Breast epithelium (tissue), 4 donors: ENCODE measurements at regions of chr17 and their contacts with region 1.

Region 1: GRCh38 chr17:65472415-65473309 is 88.8 kb downstream of the AXIN2 start:
- DNase-seq: peak in 1 of 2 donors; percentile 43
- H3K4me3 ChIP-seq: no peak overlapping the region
- H3K27ac ChIP-seq: no peak overlapping the region
- H3K4me1 ChIP-seq: no peaks in the 10 kb centered on the region
- H3K27me3 ChIP-seq: no peaks in the 10 kb centered on the region
- CTCF ChIP-seq: no peak
- POLR2A ChIP-seq: no peak

Region 2: DNA sequence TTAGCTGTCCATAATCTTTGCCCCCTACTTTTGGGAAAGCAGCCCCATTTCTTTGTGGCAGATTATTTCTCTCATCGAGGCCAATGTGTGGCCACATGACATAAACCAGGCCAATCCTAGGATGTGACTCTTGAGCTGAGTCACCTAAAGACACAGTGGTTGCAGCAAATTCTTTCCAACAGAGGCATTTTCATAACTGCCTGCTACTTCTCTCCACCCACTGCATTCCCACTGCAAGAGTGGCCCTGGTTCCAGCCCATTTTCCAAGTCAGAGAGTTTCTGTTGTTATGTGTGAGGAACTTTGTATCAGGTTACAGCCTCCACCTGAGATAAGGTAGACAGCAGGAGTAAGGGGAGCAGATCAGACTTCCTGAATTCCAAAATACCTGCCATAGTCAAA is 140.3 kb before region 1 on chr17:
- intact Hi-C with region 1: no loop called
- DNase-seq: no peak
- H3K4me3 ChIP-seq: no peak overlapping the region
- H3K27ac ChIP-seq: no peak overlapping the region
- H3K4me1 ChIP-seq: no peaks in the 10 kb centered on the region
- H3K27me3 ChIP-seq: no peaks in the 10 kb centered on the region
- CTCF ChIP-seq: no peak
- POLR2A ChIP-seq: no peak

Region 3: GRCh38 chr17:65407017-65407416 is 65.6 kb before region 1 on chr17:
- intact Hi-C with region 1: no loop called
- DNase-seq: no peak
- H3K4me3 ChIP-seq: no peak overlapping the region
- H3K27ac ChIP-seq: no peak overlapping the region
- H3K4me1 ChIP-seq: no peaks in the 10 kb centered on the region
- H3K27me3 ChIP-seq: no peaks in the 10 kb centered on the region
- CTCF ChIP-seq: no peak
- POLR2A ChIP-seq: no peak

Region 4: DNA sequence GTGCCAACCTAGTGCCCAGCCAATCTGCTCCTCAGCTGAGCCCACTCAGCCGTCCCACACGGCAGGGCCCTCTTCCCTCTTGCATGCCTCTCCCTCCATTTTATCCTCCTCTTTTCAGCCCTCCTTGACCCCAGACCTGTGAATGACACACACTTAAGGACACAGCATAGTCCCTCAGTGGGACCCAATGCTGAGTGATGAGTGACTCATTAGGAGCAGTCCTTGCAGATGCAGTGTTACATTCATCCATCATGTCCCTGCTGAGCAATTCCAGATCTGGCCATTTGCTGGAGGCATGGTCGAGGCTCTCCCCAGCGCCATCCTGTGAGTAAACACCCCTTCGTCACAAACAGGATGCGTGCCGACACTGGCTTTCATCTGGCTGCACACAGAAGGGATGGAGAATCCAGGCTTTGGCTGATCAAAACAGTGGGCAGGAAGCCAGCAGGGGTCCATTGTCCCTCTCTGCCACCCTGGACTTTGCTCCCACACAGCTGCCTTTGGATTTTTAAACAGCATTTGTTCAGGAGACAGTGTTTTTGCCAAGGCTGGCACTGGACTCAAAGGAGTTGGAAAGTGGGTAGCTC is 33.9 kb before region 1 on chr17:
- intact Hi-C with region 1: loop called (anchors 1 kb)
- DNase-seq: no peak
- H3K4me3 ChIP-seq: no peak overlapping the region
- H3K27ac ChIP-seq: no peak overlapping the region
- H3K4me1 ChIP-seq: no peaks in the 10 kb centered on the region
- H3K27me3 ChIP-seq: no peaks in the 10 kb centered on the region
- CTCF ChIP-seq: no peak
- POLR2A ChIP-seq: no peak

Region 5: DNA sequence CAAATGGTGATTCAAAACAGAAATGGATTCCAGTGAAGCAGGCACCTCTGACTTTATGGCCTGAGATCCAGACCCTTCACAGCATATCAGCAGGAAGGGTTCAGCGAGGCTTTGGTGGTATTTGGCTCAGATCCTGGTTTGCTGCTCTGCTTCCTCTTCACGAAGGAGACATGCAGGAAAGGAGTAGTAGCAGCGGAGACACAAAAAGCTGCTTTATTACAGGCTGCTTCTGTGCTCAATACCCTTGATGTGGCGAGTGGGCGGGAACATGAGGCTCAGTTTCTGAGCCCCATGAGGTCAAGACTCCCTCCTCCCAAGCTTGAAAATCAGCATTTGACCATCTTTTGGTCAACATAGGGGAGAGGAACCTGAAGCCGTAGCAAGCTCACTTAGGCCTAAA is 302.1 kb after region 1 on chr17:
- intact Hi-C with region 1: no loop called
- DNase-seq: no peak
- H3K4me3 ChIP-seq: no peak overlapping the region
- H3K27ac ChIP-seq: no peak overlapping the region
- H3K4me1 ChIP-seq: no peaks in the 10 kb centered on the region
- H3K27me3 ChIP-seq: no peaks in the 10 kb centered on the region
- CTCF ChIP-seq: no peak
- POLR2A ChIP-seq: no peak

Region 6: GRCh38 chr17:66523378-66524200 is 1050.9 kb after region 1 on chr17:
- intact Hi-C with region 1: no loop called
- DNase-seq: no peak
- H3K4me3 ChIP-seq: no peak overlapping the region
- H3K27ac ChIP-seq: no peak overlapping the region
- H3K4me1 ChIP-seq: no peaks in the 10 kb centered on the region
- H3K27me3 ChIP-seq: no peaks in the 10 kb centered on the region
- CTCF ChIP-seq: no peak
- POLR2A ChIP-seq: no peak